ENCODE measurements at regions of chr11 and their contacts with region 1.

Region 1: DNA sequence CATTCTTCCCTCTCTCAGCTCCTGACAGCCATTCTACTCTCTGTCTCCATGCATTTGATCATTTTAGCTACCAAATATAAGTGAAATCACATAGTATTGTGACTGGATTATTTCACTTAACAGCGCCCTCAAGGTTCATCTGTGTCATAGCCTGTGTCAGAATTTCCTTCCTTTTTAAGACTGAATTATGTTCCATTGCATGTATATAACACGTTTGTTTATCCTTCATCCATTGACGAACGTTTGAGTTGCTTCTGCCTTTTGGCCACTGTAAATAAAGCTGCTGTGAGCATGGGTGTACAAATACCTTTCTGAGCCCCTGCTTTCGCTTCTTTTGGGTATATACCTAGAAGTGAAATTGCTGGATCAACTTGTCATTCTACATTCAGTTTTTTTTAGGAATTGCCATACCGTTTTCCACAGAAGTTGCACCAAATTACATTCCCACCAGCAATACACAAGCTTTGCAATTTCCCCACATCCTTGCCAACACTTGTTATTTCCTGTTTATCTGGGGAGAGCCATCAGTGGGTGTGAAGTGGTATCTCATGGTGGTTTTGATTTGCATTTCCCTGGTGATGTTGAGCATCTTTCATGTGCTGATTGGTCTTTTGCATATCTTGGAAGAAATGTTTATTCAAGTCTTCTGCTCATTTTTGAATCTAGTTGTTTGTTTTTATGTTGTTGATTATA is 17.5 kb downstream of the GLB1L2 start:
- DNase-seq: no peak
- ATAC-seq: no peak
- H3K4me3 Mint-ChIP-seq: no peak overlapping the region
- H3K27ac Mint-ChIP-seq: no peak overlapping the region
- H3K4me1 Mint-ChIP-seq: peaks cover 14% of the 10 kb centered on the region
- H3K27me3 Mint-ChIP-seq: no peaks in the 10 kb centered on the region

Region 2: GRCh38 chr11:133636711-133637355 is 712.4 kb before region 1 on chr11:
- CTCF ChIA-PET with region 1: no interaction called
- POLR2A ChIA-PET with region 1: no interaction called
- intact Hi-C with region 1: loop called in 1 of 2 experiments (anchors 5 kb)
- DNase-seq: no peak
- ATAC-seq: no peak
- H3K4me3 Mint-ChIP-seq: no peak overlapping the region
- H3K27ac Mint-ChIP-seq: no peak overlapping the region
- H3K4me1 Mint-ChIP-seq: no peaks in the 10 kb centered on the region
- H3K27me3 Mint-ChIP-seq: peaks cover 14% of the 10 kb centered on the region

Region 3: DNA sequence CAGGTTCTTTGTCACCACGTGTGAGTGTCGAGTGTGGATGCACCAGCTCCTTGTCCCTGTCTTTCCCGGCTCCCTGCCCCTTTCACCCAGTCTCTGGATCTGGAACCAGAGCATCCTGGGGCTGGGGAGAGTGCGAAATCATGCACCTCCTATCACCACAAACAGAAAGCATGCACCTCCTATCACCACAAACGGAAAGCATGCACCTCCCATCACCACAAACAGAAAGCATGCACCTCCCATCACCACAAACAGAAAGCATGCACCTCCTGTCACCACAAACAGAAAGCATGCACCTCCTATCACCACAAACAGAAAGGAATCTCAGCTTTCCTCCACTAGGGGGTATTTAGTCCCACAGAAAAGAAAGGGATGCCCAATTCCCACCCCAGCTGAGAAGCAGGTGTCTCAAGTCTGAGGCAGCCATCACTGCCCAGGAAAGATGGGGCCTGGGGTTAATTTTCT is 79.0 kb before region 1 on chr11:
- CTCF ChIA-PET with region 1: no interaction called
- POLR2A ChIA-PET with region 1: no interaction called
- intact Hi-C with region 1: no loop called
- DNase-seq: peak; percentile 36
- ATAC-seq: peak; percentile 38
- H3K4me3 Mint-ChIP-seq: no peak overlapping the region
- H3K27ac Mint-ChIP-seq: peak overlapping the region; percentile 20
- H3K4me1 Mint-ChIP-seq: peaks cover 41% of the 10 kb centered on the region
- H3K27me3 Mint-ChIP-seq: no peaks in the 10 kb centered on the region

Measured in activated CD4-positive, alpha-beta T cell treated with anti-CD3 and anti-CD28 coated beads for 36 hours (primary cell).